ENCODE measurements at regions of chr11 and their contacts with region 1.

Region 1: DNA sequence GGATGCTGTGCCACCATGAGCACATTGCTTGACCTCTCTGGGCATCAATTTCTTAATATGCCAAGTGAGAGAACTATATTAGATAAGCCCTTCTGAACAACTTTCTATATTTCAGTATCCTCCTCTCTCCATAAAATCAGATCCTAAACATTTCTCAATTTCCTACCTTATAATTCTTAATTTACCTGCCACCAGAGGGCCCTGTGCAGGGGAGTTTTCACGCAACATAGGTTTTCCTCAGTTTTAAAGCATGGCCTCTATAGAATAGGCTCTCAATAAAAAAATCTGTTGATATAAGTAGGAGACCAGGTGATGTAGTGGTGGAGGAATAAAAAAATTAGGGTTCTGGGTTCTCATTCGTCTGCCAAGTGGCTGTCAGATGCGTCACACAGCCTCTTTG is 83.7 kb upstream of the DBX1 start:
- DNase-seq: no peak
- H3K4me3 ChIP-seq: no peak overlapping the region
- H3K27ac ChIP-seq: no peak overlapping the region
- H3K4me1 ChIP-seq: no peaks in the 10 kb centered on the region
- H3K27me3 ChIP-seq: peaks cover 3% of the 10 kb centered on the region
- CTCF ChIP-seq: peak; percentile 18 to 42

Region 2: DNA sequence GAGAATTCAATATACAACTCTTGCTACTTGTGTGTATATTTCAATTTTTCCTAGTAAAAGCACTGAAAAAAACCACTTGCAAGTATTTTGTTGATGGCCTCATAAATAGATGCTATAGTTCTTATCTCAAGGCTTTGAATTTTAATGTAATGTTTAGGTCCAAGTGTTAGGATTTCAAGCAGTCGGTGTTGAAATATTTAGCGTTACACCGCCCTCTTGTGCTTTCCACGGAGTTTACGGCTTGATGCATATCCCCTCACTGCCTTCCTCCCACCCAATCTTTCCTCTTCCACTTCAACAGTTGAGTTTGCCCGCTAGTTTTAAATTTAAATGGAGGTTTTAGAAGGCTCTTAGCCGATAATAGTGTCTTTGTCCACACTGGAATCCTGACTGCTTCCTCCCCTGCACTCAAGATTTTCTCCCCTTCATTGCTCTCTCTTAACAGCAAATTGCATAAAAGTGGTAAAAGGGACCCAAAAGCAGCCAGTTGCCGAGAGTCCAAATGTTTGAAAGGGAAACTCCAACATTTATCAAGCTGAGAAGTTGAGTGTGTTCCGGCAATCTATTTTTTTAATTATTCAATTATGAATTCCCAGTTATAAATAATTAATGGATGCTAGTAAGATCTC is 93.7 kb after region 1 on chr11:
- CTCF ChIA-PET with region 1: no interaction called
- dilution Hi-C with region 1: no loop called
- in situ Hi-C with region 1: no loop called
- intact Hi-C with region 1: loop called (anchors 1 kb)
- DNase-seq: peak; percentile 8
- H3K4me3 ChIP-seq: no peak overlapping the region
- H3K27ac ChIP-seq: no peak overlapping the region
- H3K4me1 ChIP-seq: no peaks in the 10 kb centered on the region
- H3K27me3 ChIP-seq: peaks cover 14% of the 10 kb centered on the region
- CTCF ChIP-seq: peak; percentile 35 to 45

Region 3: DNA sequence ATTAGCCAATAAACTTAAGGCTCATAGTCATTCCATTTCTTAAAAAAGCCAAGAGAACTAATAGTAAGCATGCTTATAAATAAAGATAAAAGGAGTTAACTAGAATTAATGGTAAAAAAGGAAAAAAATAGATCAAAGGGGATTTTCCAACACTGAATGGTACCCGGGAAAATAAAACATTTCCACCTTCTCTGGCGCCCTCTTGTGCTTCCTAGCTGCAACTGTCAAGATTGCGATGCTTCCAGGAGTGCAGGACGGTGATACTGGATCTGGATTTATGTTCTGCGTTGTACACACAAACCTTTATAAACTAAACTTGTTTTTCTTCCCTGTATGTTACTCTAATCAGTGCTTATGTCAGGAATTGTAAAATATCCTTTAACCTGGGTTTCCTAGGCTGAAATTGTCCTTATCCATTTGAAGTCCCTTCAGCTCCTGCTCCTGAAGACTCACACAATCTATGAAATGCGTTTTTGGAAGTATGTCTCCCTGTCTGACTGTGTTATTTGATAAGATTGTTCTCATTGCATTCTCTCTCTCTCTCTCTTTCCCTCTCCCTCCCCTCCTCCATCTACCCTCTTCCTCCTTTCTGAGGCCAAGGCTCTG is 110.0 kb after region 1 on chr11:
- CTCF ChIA-PET with region 1: no interaction called
- dilution Hi-C with region 1: no loop called
- in situ Hi-C with region 1: no loop called
- intact Hi-C with region 1: loop called (anchors 5 kb)
- DNase-seq: peak; percentile 26
- H3K4me3 ChIP-seq: no peak overlapping the region
- H3K27ac ChIP-seq: no peak overlapping the region
- H3K4me1 ChIP-seq: no peaks in the 10 kb centered on the region
- H3K27me3 ChIP-seq: no peaks in the 10 kb centered on the region
- CTCF ChIP-seq: peak; percentile 92 to 97